ENCODE measurements at regions of chr12 and their contacts with region 1.

Region 1: DNA sequence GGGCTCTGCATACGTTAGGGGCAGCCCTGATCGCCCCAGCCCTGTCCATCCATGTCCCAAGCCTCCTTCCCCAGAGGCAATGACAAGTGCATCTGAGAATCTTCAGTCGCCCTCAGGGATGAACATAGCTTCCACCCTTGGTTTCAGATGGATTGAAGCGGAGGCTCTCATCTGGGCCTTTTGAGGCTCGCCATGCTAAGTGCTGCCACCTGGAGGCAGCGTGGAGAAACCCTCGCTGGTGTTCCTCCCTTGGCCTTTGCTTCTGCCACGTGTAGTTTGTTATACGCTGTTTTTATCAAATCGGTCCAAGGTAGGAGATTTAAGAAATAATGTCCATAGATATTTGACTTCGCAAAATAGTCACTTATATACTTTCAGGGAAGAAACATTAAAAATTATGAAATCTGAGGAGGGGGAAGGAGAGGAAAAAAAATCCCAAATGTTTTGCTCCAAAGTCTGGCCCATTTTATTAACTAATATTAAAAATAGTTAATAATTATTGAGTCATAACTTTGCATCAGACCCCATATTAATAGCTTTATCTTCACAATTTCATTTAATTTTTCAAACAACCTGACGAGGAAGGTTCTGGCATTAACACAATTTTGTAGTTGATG is 28.8 kb upstream of the LRRC10 start:
- DNase-seq: peak; percentile 70
- H3K4me3 Mint-ChIP-seq: no peak overlapping the region
- H3K27ac Mint-ChIP-seq: no peak overlapping the region
- H3K4me1 Mint-ChIP-seq: no peaks in the 10 kb centered on the region
- H3K27me3 Mint-ChIP-seq: peaks cover 3% of the 10 kb centered on the region

Region 2: DNA sequence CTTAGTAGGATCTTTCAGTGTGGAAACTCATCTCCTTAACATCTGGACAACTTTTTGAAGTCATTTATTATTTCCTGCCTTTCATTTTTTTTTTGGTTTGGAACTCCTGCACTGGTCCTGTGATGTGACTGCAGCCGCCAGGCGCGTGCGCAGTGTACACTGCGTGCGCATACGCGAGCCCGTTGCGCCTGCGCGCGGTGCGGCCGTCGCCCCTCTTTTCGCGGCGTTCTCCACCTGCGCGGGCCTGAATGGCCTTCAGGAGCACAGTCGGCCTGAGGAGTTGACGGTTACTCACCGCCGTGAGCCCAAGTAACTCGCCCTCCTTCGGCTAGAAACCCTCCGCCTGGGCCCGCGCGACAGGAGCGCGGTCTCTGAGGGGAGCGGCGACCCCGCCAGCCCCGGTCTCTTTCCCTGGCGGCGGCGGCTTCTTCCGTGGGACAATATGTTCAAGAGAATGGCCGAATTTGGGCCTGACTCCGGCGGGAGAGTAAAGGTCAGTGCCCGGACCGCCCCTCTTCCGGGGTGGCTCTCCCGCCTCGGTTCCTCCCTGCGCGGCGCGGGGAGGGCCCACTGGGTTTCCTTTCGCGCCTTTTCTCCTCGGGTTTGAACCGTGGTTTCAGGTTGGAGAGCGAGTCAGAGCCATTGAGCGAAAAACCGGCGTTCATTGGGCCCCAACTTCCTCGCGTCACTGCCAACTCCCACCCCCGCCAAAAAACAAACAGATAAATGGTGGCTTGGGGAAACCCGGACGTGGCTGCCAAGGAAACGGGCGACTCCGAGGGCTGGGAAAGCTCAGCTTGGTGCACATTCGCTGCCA is 279.8 kb before region 1 on chr12 and contains the start of gene YEATS4:
- CTCF ChIA-PET with region 1: interaction called, 25 read pairs
- DNase-seq: peak; percentile 93
- H3K4me3 Mint-ChIP-seq: peak within 1 kb of the TSS; percentile 89
- H3K27ac Mint-ChIP-seq: peak within 1 kb of the TSS; percentile 94
- H3K4me1 Mint-ChIP-seq: peaks cover 38% of the 10 kb centered on the region
- H3K27me3 Mint-ChIP-seq: peaks cover 3% of the 10 kb centered on the region

Region 3: GRCh38 chr12:69719382-69720316 is 80.1 kb after region 1 on chr12:
- CTCF ChIA-PET with region 1: no interaction called
- DNase-seq: no peak
- H3K4me3 Mint-ChIP-seq: no peak overlapping the region
- H3K27ac Mint-ChIP-seq: no peak overlapping the region
- H3K4me1 Mint-ChIP-seq: peaks cover 2% of the 10 kb centered on the region
- H3K27me3 Mint-ChIP-seq: peaks cover 15% of the 10 kb centered on the region